Heart right ventricle (tissue), 16 donors: ENCODE measurements at regions of chr13 and their contacts with region 1.

Region 1: DNA sequence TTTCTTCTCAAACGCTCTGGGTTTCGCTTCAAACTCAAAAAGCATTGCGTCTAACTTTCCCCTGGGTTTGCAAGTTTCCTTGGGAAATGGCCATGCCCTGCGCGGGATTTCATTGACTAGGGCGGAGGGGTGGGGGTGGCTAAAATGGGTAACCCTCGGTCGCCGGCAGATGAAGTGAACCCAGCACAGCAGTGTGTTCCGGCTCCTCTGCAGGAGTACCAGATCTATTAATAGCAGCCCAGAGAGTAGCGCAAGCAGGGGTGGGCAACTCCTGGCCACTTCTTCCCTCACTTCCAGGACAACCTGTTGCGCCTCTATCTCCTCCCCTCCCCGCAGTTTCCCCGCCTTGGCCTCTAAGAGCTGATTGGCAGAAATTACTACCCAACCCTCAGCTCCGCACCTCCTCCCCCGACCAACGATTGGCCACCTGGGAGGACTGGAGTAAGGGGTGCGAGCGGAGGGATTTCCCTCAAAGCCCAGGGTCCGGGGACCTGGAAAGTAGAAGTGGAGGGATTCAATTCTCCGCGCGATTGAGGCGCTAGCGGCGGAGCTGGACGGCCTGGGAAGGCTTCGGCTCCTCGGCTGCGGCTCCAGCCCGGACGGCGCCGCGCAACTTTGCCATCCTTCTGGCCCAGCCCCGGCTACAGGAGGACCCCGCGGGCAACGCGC is at the start of gene FREM2:
- DNase-seq: no peak
- ATAC-seq: peak in 7 of 8 donors; percentile 28 to 85 (median 68)
- H3K4me3 ChIP-seq: peak within 1 kb of the TSS; percentile 11 to 50 (median 43)
- H3K27ac ChIP-seq: no peak within 1 kb of the TSS
- H3K4me1 ChIP-seq: peaks cover 0 to 16% (median 10%) of the 10 kb centered on the region in 9 donors
- H3K27me3 ChIP-seq: peaks cover 0 to 63% (median 50%) of the 10 kb centered on the region in 7 donors
- CTCF ChIP-seq: no peak
- total RNA-seq, gene FREM2: 0.02 to 0.46 (median 0.14) TPM in 9 of 10 donors, not detected in the other

Region 2: DNA sequence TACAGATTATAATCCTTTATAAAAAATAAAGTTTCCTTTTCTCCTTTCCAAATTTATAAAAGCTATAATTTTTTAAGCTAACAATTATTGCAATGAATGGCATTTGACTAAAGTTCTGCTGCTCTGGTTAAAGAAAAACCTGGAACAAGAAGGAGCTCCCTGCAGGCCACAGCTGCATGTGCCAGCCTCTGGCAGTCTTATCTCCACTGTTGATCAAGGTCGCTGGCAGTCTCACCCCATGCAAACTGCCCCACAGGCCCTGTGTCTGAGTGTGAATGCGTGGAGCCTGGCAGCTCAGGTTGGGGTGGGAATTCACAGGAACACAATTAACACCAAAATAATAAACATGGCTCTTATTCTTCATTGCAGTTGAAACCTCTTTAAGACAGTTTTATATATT is 30.0 kb before region 1 on chr13:
- intact Hi-C with region 1: no loop called
- DNase-seq: no peak
- ATAC-seq: no peak
- H3K4me3 ChIP-seq: no peak overlapping the region
- H3K27ac ChIP-seq: no peak overlapping the region
- H3K4me1 ChIP-seq: no peaks in the 10 kb centered on the region
- H3K27me3 ChIP-seq: no peaks in the 10 kb centered on the region
- CTCF ChIP-seq: no peak

Region 3: DNA sequence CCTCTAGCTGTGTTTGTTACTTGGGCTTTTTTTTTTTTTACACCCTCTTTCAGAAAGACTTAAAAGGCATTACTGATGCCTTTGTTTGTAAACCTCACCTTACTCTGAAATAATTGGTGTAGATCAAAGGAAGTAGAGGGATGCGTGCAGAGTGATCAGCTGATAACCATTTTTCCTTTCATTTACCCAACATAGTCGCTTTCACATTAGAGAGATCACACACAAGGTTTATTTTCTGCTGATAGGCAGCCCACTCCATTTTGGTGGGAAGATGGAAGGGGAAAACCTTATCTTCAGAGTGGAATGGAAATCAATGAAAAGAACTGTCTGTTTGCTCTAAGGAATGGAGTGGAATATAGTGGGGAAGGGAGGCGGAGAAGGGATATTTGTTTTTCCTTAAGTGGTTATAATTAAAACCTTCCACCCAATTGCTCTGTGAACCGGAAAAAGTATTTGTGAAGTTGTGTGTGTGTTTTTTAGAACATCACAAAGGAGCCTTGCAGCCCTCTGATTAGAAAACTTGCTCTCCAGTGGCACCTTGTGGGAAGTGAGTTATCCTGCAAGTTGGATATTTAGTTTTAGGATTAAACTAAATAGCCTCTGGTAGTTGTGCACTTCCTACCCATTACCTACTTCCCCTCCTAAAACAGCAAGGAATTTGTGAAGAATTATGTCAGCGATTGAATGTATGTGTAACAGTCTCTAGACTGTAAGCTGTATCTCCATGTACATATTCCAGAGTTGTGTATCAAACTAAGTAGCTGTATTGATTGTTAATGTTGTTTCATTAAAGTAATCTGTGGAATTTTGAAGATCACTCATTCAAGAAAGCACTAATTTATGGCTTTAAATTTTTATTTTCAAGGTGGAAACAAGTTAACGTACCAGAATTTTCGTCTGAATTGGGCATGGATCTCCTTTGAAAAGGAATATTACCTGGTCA is 77.0 kb after region 1 on chr13:
- intact Hi-C with region 1: loop called in 7 of 10 experiments (anchors 5 kb)
- DNase-seq: no peak
- ATAC-seq: peak in 1 of 8 donors; percentile 45
- H3K4me3 ChIP-seq: no peak overlapping the region
- H3K27ac ChIP-seq: no peak overlapping the region
- H3K4me1 ChIP-seq: peaks cover 0 to 6% (median 0%) of the 10 kb centered on the region in 9 donors
- H3K27me3 ChIP-seq: peaks cover 0 to 20% (median 7%) of the 10 kb centered on the region in 7 donors
- CTCF ChIP-seq: peak; percentile 10 to 63 (median 44)

Region 4: DNA sequence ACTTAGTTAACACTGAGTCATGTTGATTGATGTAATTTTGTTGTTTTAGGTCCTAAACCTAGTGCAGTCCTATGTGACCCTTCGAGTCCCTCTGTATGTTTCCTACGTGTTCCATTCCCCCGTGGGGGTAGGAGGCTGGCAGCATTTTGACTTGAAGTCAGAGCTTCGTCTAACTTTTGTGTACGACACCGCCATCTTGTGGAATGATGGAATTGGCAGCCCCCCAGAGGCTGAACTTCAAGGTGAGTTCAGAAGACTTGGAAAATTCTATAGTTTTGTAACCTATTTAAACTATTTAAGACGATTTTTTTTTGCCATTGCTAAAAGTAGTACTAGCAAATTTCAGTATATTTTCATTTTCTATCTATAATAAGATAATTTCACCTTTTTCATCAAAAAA is 186.0 kb after region 1 on chr13:
- intact Hi-C with region 1: loop called in 3 of 10 experiments (anchors 5 to 10 kb)
- DNase-seq: peak; percentile 12 to 24
- ATAC-seq: peak in 1 of 8 donors; percentile 33
- H3K4me3 ChIP-seq: no peak overlapping the region
- H3K27ac ChIP-seq: no peak overlapping the region
- H3K4me1 ChIP-seq: no peaks in the 10 kb centered on the region
- H3K27me3 ChIP-seq: peaks cover 0 to 16% (median 0%) of the 10 kb centered on the region in 7 donors
- CTCF ChIP-seq: peak in 8 of 9 donors; percentile 5 to 61 (median 46)

Region 5: GRCh38 chr13:38914070-38914469 is 227.4 kb after region 1 on chr13:
- intact Hi-C with region 1: loop called in 1 of 10 experiments (anchors 10 kb)
- DNase-seq: no peak
- ATAC-seq: no peak
- H3K4me3 ChIP-seq: no peak overlapping the region
- H3K27ac ChIP-seq: no peak overlapping the region
- H3K4me1 ChIP-seq: no peaks in the 10 kb centered on the region
- H3K27me3 ChIP-seq: peaks cover 0 to 22% (median 5%) of the 10 kb centered on the region in 7 donors
- CTCF ChIP-seq: no peak

Region 6: GRCh38 chr13:38990693-38991092 is 304.0 kb after region 1 on chr13 and contains the start of gene STOML3:
- intact Hi-C with region 1: no loop called
- DNase-seq: no peak
- ATAC-seq: no peak
- H3K4me3 ChIP-seq: no peak within 1 kb of the TSS
- H3K27ac ChIP-seq: no peak within 1 kb of the TSS
- H3K4me1 ChIP-seq: no peaks in the 10 kb centered on the region
- H3K27me3 ChIP-seq: no peaks in the 10 kb centered on the region
- CTCF ChIP-seq: no peak
- total RNA-seq, gene STOML3: not detected